CD4-positive, alpha-beta T cell (primary cell): ENCODE measurements at regions of chr14 and their contacts with region 1.

Region 1: DNA sequence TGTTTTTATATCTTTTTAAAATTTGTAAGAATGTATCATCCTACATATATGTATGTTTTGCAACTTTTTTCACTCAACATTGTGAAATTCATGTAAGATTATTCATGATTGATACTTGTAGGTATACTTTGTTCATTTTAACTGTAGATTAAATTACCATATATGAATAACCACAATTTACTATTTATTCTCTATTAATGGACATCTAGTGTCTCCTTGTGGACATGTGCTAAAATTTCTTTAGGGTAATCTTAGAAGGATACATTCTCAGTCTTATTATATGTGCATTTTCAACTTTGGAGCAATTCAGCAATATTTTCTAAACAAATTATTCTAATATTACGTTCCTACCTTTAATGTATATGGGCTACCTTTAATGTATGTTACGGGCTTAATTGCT is 192.4 kb downstream of the FUT8 start:
- DNase-seq: peak in 1 of 14 experiments; percentile 17
- ATAC-seq: no peak
- H3K4me3 ChIP-seq: no peak overlapping the region
- H3K4me3 Mint-ChIP-seq: no peak overlapping the region
- H3K27ac ChIP-seq: no peak overlapping the region
- H3K27ac Mint-ChIP-seq: no peak overlapping the region
- H3K4me1 ChIP-seq: no peaks in the 10 kb centered on the region
- H3K4me1 Mint-ChIP-seq: peaks cover 12% of the 10 kb centered on the region
- H3K27me3 ChIP-seq: no peaks in the 10 kb centered on the region
- H3K27me3 Mint-ChIP-seq: no peaks in the 10 kb centered on the region
- CTCF ChIP-seq: no peak

Region 2: GRCh38 chr14:65222440-65222858 is 382.5 kb before region 1 on chr14:
- CTCF ChIA-PET with region 1: no interaction called
- POLR2A ChIA-PET with region 1: no interaction called
- intact Hi-C with region 1: loop called in 1 of 2 experiments (anchors 10 kb)
- DNase-seq: peak; percentile 22 to 75 (median 46)
- ATAC-seq: peak; percentile 79
- H3K4me3 ChIP-seq: no peak overlapping the region
- H3K4me3 Mint-ChIP-seq: no peak overlapping the region
- H3K27ac ChIP-seq: no peak overlapping the region
- H3K27ac Mint-ChIP-seq: peak overlapping the region; percentile 3
- H3K4me1 ChIP-seq: peaks cover 42% of the 10 kb centered on the region
- H3K4me1 Mint-ChIP-seq: peaks cover 33% of the 10 kb centered on the region
- H3K27me3 ChIP-seq: no peaks in the 10 kb centered on the region
- H3K27me3 Mint-ChIP-seq: no peaks in the 10 kb centered on the region
- CTCF ChIP-seq: peak; percentile 76